ENCODE measurements at regions of chr19 and their contacts with region 1.

Region 1: GRCh38 chr19:7861955-7862951 is 11.9 kb downstream of the PRR36 start:
- DNase-seq: no peak
- H3K4me3 ChIP-seq: peak overlapping the region; percentile 34 to 46 (median 38)
- H3K27ac ChIP-seq: no peak overlapping the region
- H3K4me1 ChIP-seq: peaks cover 3 to 21% (median 20%) of the 10 kb centered on the region in 4 donors
- H3K27me3 ChIP-seq: peaks cover 0 to 98% (median 21%) of the 10 kb centered on the region in 4 donors
- CTCF ChIP-seq: no peak
- EP300 ChIP-seq: no peak
- POLR2A ChIP-seq: no peak

Region 2: DNA sequence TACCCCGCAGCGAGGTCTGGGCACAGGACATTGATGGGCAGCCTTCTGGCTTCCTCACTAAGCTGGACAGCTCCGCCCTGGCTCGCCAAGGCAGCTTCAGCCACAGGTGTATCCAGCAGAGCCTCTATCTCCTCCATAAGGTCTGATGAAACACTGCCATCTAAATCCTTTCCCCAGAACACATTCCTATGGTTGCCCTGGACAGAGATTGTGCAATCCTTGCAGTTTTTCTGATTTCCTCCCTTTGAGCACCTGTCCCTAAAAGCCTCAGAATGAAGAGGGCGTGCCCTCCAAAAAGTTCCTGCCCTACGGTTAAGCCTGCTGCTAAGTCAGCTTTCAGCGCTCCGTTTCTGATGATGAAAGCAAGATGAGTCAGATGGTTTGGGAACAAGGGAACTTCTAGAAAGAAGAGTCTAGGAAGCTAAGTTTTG is 78.2 kb before region 1 on chr19:
- intact Hi-C with region 1: no loop called
- DNase-seq: no peak
- H3K4me3 ChIP-seq: no peak overlapping the region
- H3K27ac ChIP-seq: no peak overlapping the region
- H3K4me1 ChIP-seq: peaks cover 0 to 9% (median 4%) of the 10 kb centered on the region in 4 donors
- H3K27me3 ChIP-seq: peaks cover 0 to 92% (median 17%) of the 10 kb centered on the region in 4 donors
- CTCF ChIP-seq: no peak
- EP300 ChIP-seq: no peak
- POLR2A ChIP-seq: no peak

Region 3: DNA sequence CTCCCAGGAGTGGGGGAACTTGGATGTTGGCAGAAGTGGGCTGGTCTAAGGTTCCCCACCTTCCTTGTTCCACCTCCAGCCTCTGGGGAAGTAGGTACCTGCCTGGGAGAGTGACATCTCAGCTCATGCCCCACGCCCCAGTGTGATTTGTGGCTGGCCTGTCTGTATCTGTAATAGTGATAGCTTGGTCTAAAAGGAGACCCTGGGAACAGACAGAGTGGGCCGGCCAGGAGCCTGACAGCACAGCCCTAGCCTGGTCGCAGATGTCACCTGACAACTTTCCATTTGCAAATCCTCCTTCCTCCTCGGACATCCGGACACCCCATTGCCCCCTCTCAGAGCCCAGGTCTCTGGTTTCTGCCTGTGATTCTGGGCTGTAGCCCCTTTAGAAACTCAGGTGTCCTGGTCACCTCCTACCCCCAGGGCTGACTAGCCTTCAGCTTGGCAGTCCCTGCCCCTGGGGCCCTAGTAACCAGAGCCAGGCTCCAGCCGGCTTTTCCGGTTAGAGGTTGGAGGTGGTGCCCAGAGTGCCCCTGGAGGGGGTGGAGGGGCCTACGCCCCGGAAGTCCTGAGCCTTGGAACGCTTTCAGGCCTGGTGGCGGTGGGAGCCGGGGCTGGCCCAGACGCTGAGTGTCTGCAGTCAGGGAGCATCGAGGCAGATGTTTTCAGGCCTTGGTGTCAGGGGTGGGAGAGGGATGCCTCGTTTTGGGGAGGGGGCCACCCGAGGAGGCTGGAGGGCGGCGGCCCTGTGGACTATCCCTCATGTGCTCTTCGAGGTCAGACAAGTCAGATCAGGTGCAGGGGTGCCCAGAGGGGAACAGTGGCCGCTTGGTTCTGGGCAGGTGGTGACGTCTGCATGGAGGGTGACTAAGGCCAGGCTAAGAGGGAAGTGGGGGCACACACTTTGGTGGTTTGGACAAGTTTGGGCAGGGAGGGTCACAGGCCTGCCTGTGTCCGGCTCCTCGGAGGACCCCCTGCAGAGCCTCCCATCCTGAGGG is 32.6 kb after region 1 on chr19:
- intact Hi-C with region 1: loop called (anchors 5 kb)
- DNase-seq: no peak
- H3K4me3 ChIP-seq: no peak overlapping the region
- H3K27ac ChIP-seq: no peak overlapping the region
- H3K4me1 ChIP-seq: no peaks in the 10 kb centered on the region
- H3K27me3 ChIP-seq: peaks cover 0 to 49% (median 4%) of the 10 kb centered on the region in 4 donors
- CTCF ChIP-seq: no peak
- EP300 ChIP-seq: no peak
- POLR2A ChIP-seq: no peak

Region 4: GRCh38 chr19:8269724-8270123 is 407.5 kb after region 1 on chr19:
- intact Hi-C with region 1: no loop called
- DNase-seq: no peak
- H3K4me3 ChIP-seq: peak overlapping the region in 1 of 4 donors; percentile 53
- H3K27ac ChIP-seq: no peak overlapping the region
- H3K4me1 ChIP-seq: peaks cover 4 to 17% (median 13%) of the 10 kb centered on the region in 4 donors
- H3K27me3 ChIP-seq: peaks cover 0 to 9% (median 0%) of the 10 kb centered on the region in 4 donors
- CTCF ChIP-seq: no peak
- EP300 ChIP-seq: no peak
- POLR2A ChIP-seq: no peak